B cell (primary cell): ENCODE measurements at regions of chr19 and their contacts with region 1.

Region 1: GRCh38 chr19:55599468-55600279 is at the start of gene FIZ1:
- DNase-seq: peak; percentile 99
- ATAC-seq: peak; percentile 70
- H3K4me3 ChIP-seq: peak within 1 kb of the TSS; percentile 59 to 97 (median 82)
- H3K4me3 Mint-ChIP-seq: peak within 1 kb of the TSS; percentile 100
- H3K27ac ChIP-seq: peak within 1 kb of the TSS; percentile 86 to 94
- H3K27ac Mint-ChIP-seq: peak within 1 kb of the TSS; percentile 99
- H3K4me1 ChIP-seq: peaks cover 9 to 24% of the 10 kb centered on the region in 2 donors
- H3K4me1 Mint-ChIP-seq: peaks cover 25% of the 10 kb centered on the region
- H3K27me3 ChIP-seq: no peaks in the 10 kb centered on the region
- H3K27me3 Mint-ChIP-seq: no peaks in the 10 kb centered on the region
- CTCF ChIP-seq: no peak
- total RNA-seq, gene FIZ1: 21.4 and 26.4 TPM in 2 replicates

Region 2: DNA sequence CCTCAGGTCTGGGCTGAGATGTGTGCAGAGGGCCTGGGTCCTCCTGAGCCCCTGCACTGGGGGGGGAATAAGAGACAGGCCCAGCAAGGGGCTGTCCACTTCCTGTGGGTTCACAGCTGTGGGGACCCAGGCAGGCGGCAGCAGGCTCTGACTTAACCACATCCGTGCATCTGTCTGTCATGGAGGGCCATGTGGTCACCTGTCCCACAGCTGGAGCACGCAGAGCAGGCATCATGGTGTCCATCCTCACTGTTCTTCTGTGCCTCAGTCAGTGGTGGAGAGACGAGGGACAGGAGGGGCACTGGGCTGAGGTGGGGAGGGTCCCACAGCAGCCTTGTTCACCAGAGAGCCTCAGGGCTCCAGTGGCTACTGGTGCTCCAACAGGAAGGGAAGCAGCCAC is 891.7 kb before region 1 on chr19:
- CTCF ChIA-PET with region 1: no interaction called
- POLR2A ChIA-PET with region 1: no interaction called
- intact Hi-C with region 1: no loop called
- DNase-seq: no peak
- ATAC-seq: no peak
- H3K4me3 ChIP-seq: no peak overlapping the region
- H3K4me3 Mint-ChIP-seq: no peak overlapping the region
- H3K27ac ChIP-seq: no peak overlapping the region
- H3K27ac Mint-ChIP-seq: no peak overlapping the region
- H3K4me1 ChIP-seq: no peaks in the 10 kb centered on the region
- H3K4me1 Mint-ChIP-seq: peaks cover 3% of the 10 kb centered on the region
- H3K27me3 ChIP-seq: peaks cover 0 to 6% (median 1%) of the 10 kb centered on the region in 4 experiments
- H3K27me3 Mint-ChIP-seq: peaks cover 16% of the 10 kb centered on the region
- CTCF ChIP-seq: no peak

Region 3: DNA sequence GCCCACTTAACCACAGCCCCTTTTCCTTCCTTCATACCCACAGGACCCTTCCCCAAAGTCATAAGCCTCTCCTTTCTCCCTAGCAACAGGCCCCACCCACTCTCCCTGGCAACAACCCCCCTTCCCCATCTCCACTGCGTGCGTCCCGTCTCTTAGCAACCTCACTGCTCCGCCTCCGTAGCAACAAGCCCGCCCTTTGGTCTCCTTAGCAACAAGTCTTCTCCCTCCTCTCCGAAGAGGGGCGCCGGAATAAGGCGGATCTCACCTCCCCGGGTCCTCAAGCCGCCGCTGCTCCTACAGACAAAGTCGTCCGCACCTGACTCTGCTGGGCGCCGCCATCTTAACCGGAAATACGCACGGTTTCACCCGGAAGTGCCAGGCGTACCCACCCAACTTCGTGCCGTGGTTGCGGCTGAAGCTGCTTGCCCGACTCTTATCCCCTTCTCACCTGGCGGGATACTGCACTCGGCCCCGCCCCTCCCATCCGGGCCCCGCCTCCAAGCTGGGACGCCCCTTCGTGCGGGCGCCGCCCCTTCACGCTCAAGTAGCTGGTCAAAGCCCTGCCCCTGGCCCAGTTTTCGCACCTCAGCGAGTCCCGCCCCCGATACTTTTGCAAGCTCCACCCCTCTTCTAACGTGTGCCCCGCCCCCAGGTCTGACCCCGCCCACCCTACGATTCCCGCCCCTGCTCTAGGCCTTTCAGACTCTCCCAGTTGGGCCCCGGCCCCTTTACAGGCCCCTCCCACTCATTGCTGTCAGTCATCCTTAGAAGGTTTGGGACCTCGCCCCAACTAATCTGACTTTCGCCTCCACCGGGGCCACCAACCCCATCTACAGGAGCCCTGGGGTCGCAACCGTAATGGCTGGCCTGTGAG is 319.7 kb before region 1 on chr19 and contains the start of gene HSPBP1:
- CTCF ChIA-PET with region 1: no interaction called
- POLR2A ChIA-PET with region 1: interaction called, 4 read pairs
- intact Hi-C with region 1: loop called (anchors 10 kb)
- DNase-seq: peak; percentile 99
- ATAC-seq: peak; percentile 85
- H3K4me3 ChIP-seq: peak within 1 kb of the TSS; percentile 63 to 83 (median 71)
- H3K4me3 Mint-ChIP-seq: peak within 1 kb of the TSS; percentile 99
- H3K27ac ChIP-seq: peak within 1 kb of the TSS; percentile 87 to 96
- H3K27ac Mint-ChIP-seq: peak within 1 kb of the TSS; percentile 99
- H3K4me1 ChIP-seq: peaks cover 56 to 71% of the 10 kb centered on the region in 2 donors
- H3K4me1 Mint-ChIP-seq: peaks cover 68% of the 10 kb centered on the region
- H3K27me3 ChIP-seq: peaks cover 0 to 9% (median 3%) of the 10 kb centered on the region in 4 experiments
- H3K27me3 Mint-ChIP-seq: peaks cover 7% of the 10 kb centered on the region
- CTCF ChIP-seq: no peak
- total RNA-seq, gene HSPBP1: 15.6 and 18.2 TPM in 2 replicates

Region 4: DNA sequence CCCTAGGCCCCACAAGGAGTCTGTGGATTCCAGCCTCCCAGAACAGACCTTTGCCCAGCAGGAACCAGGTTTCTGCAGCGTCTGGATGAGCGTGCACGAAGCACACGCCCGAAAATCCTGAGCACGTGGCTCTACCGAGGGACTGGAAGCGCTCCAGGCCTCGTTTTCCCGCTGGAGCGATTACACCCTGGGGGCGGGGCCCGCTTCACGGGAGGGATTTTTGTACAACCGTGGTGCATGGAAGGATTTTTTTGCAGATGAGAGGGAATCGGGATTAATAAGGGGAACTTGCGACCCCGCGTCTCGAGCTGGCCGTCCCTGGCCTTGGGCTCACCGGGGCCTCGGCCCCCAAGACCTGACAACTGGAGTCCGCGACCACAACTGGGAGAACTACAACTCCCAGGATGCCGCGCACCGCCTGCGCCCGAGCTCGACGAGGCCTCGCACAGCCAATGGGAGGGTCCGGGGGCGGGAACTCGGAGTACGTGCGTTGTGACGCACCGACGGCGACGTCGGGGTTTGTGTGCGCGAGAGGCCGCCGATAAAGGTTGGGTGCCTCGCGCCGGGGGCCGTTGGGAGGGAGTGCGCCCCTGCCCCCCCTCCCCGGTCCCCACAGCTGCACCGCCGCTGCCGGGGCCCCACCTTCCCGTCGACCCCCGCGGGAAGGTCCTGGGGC is 123.4 kb before region 1 on chr19 and contains the start of gene ZNF628:
- CTCF ChIA-PET with region 1: no interaction called
- POLR2A ChIA-PET with region 1: interaction called, 16 read pairs
- intact Hi-C with region 1: loop called (anchors 1 kb)
- DNase-seq: peak; percentile 99
- ATAC-seq: peak; percentile 90
- H3K4me3 ChIP-seq: peak within 1 kb of the TSS; percentile 63 to 97 (median 77)
- H3K4me3 Mint-ChIP-seq: peak within 1 kb of the TSS; percentile 95
- H3K27ac ChIP-seq: peak within 1 kb of the TSS; percentile 69 to 92
- H3K27ac Mint-ChIP-seq: peak within 1 kb of the TSS; percentile 97
- H3K4me1 ChIP-seq: peaks cover 15 to 21% of the 10 kb centered on the region in 2 donors
- H3K4me1 Mint-ChIP-seq: peaks cover 34% of the 10 kb centered on the region
- H3K27me3 ChIP-seq: no peaks in the 10 kb centered on the region
- H3K27me3 Mint-ChIP-seq: no peaks in the 10 kb centered on the region
- CTCF ChIP-seq: no peak
- total RNA-seq, gene ZNF628: 13.3 and 15.5 TPM in 2 replicates

Region 5: GRCh38 chr19:55586976-55587668 is 12.6 kb before region 1 on chr19:
- CTCF ChIA-PET with region 1: interaction called, 3 read pairs
- POLR2A ChIA-PET with region 1: interaction called, 12 read pairs
- intact Hi-C with region 1: loop called (anchors 1 kb)
- DNase-seq: peak; percentile 93
- ATAC-seq: peak; percentile 94
- H3K4me3 ChIP-seq: peak overlapping the region; percentile 33 to 59 (median 41)
- H3K4me3 Mint-ChIP-seq: peak overlapping the region; percentile 90
- H3K27ac ChIP-seq: no peak overlapping the region
- H3K27ac Mint-ChIP-seq: peak overlapping the region; percentile 84
- H3K4me1 ChIP-seq: peaks cover 24 to 27% of the 10 kb centered on the region in 2 donors
- H3K4me1 Mint-ChIP-seq: peaks cover 26% of the 10 kb centered on the region
- H3K27me3 ChIP-seq: no peaks in the 10 kb centered on the region
- H3K27me3 Mint-ChIP-seq: no peaks in the 10 kb centered on the region
- CTCF ChIP-seq: no peak

Region 6: GRCh38 chr19:55653758-55654539 is 54.3 kb after region 1 on chr19:
- CTCF ChIA-PET with region 1: interaction called, 5 read pairs
- POLR2A ChIA-PET with region 1: interaction called, 12 read pairs
- intact Hi-C with region 1: no loop called
- DNase-seq: peak; percentile 100
- ATAC-seq: peak; percentile 77
- H3K4me3 ChIP-seq: peak overlapping the region; percentile 66 to 98 (median 92)
- H3K4me3 Mint-ChIP-seq: peak overlapping the region; percentile 93
- H3K27ac ChIP-seq: peak overlapping the region; percentile 98 to 100
- H3K27ac Mint-ChIP-seq: peak overlapping the region; percentile 96
- H3K4me1 ChIP-seq: peaks cover 41 to 53% of the 10 kb centered on the region in 2 donors
- H3K4me1 Mint-ChIP-seq: peaks cover 56% of the 10 kb centered on the region
- H3K27me3 ChIP-seq: no peaks in the 10 kb centered on the region
- H3K27me3 Mint-ChIP-seq: no peaks in the 10 kb centered on the region
- CTCF ChIP-seq: peak; percentile 100

Region 7: GRCh38 chr19:55877211-55877610 is 277.5 kb after region 1 on chr19:
- CTCF ChIA-PET with region 1: no interaction called
- POLR2A ChIA-PET with region 1: no interaction called
- intact Hi-C with region 1: no loop called
- DNase-seq: no peak
- ATAC-seq: no peak
- H3K4me3 ChIP-seq: no peak overlapping the region
- H3K4me3 Mint-ChIP-seq: no peak overlapping the region
- H3K27ac ChIP-seq: no peak overlapping the region
- H3K27ac Mint-ChIP-seq: no peak overlapping the region
- H3K4me1 ChIP-seq: no peaks in the 10 kb centered on the region
- H3K4me1 Mint-ChIP-seq: no peaks in the 10 kb centered on the region
- H3K27me3 ChIP-seq: no peaks in the 10 kb centered on the region
- H3K27me3 Mint-ChIP-seq: no peaks in the 10 kb centered on the region
- CTCF ChIP-seq: no peak

Region 8: GRCh38 chr19:56291867-56292266 is 692.2 kb after region 1 on chr19:
- CTCF ChIA-PET with region 1: no interaction called
- POLR2A ChIA-PET with region 1: no interaction called
- intact Hi-C with region 1: no loop called
- DNase-seq: no peak
- ATAC-seq: no peak
- H3K4me3 ChIP-seq: no peak overlapping the region
- H3K4me3 Mint-ChIP-seq: no peak overlapping the region
- H3K27ac ChIP-seq: no peak overlapping the region
- H3K27ac Mint-ChIP-seq: no peak overlapping the region
- H3K4me1 ChIP-seq: no peaks in the 10 kb centered on the region
- H3K4me1 Mint-ChIP-seq: no peaks in the 10 kb centered on the region
- H3K27me3 ChIP-seq: no peaks in the 10 kb centered on the region
- H3K27me3 Mint-ChIP-seq: no peaks in the 10 kb centered on the region
- CTCF ChIP-seq: no peak